ENCODE measurements at regions of chr22 and their contacts with region 1.

Region 1: GRCh38 chr22:43273902-43274484 is 69.2 kb downstream of the SCUBE1 start:
- DNase-seq: peak; percentile 77
- H3K4me3 Mint-ChIP-seq: no peak overlapping the region
- H3K27ac Mint-ChIP-seq: no peak overlapping the region
- H3K4me1 Mint-ChIP-seq: peaks cover 25% of the 10 kb centered on the region
- H3K27me3 Mint-ChIP-seq: no peaks in the 10 kb centered on the region
- CTCF ChIP-seq: peak; percentile 82

Region 2: DNA sequence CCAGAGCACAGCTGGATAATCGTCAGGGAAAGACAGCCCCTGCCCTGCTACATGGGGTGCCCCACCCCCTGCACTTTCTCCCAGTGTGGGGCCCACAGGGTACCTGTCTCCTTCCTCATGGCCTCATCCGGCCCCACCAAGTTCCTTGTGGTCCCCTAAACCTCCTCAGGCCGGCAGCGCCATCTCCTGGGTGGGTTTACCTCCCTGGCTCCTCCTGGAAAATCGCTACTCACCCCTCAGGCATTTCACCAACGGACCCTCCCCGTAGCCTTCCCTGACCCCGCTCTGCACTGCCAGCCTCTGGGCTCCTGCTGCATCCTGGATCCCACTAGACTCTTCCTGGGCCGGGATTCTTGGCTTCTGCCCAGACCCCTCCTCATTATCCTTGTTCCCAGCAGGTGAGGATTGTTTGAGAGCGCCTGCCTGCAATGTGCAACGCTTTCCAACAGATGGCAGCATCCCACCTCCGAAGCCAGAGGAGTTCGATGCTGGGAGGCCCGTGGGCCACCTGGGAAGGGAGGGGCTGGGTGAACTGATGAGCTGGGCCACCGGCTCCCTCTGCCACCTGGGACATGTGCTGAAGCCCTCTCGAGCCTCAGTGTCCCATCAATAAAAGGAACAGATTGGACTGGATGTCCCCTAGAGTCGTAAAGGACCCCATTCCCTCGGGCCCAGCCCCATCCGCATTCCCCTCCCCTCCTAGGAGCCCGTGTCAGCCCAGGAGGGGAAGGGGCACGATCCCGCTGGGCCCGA is 42.8 kb before region 1 on chr22:
- CTCF ChIA-PET with region 1: interaction called, 27 read pairs
- POLR2A ChIA-PET with region 1: no interaction called
- intact Hi-C with region 1: loop called (anchors 2 kb)
- DNase-seq: peak; percentile 65
- H3K4me3 Mint-ChIP-seq: no peak overlapping the region
- H3K27ac Mint-ChIP-seq: no peak overlapping the region
- H3K4me1 Mint-ChIP-seq: peaks cover 12% of the 10 kb centered on the region
- H3K27me3 Mint-ChIP-seq: peaks cover 43% of the 10 kb centered on the region
- CTCF ChIP-seq: peak; percentile 94

Region 3: DNA sequence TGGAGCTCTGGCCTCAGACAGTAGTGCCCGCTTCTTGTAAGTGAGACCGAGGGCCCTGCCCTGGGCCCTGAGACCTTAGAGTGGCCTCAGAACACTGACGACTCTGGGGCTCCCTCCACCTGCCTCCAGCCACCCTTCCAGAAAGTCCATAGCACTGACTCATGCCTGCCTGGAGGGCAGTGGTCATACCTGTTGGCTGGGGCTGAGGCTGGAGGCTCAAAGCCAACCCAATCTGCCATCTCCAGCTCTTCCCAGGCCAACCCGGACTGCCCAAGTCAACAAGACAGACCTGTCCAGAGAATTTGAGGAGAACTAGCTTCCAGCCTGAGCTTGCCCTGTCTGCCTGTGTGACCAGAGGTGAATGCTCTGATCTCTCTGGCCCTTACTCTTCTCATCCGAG is 20.2 kb before region 1 on chr22:
- CTCF ChIA-PET with region 1: interaction called, 11 read pairs
- POLR2A ChIA-PET with region 1: interaction called, 3 read pairs
- intact Hi-C with region 1: no loop called
- DNase-seq: no peak
- H3K4me3 Mint-ChIP-seq: no peak overlapping the region
- H3K27ac Mint-ChIP-seq: no peak overlapping the region
- H3K4me1 Mint-ChIP-seq: peaks cover 9% of the 10 kb centered on the region
- H3K27me3 Mint-ChIP-seq: peaks cover 61% of the 10 kb centered on the region
- CTCF ChIP-seq: no peak

Region 4: GRCh38 chr22:43292630-43293018 is 18.6 kb after region 1 on chr22:
- CTCF ChIA-PET with region 1: no interaction called
- POLR2A ChIA-PET with region 1: no interaction called
- intact Hi-C with region 1: no loop called
- DNase-seq: no peak
- H3K4me3 Mint-ChIP-seq: no peak overlapping the region
- H3K27ac Mint-ChIP-seq: no peak overlapping the region
- H3K4me1 Mint-ChIP-seq: peaks cover 5% of the 10 kb centered on the region
- H3K27me3 Mint-ChIP-seq: no peaks in the 10 kb centered on the region
- CTCF ChIP-seq: no peak

Region 5: DNA sequence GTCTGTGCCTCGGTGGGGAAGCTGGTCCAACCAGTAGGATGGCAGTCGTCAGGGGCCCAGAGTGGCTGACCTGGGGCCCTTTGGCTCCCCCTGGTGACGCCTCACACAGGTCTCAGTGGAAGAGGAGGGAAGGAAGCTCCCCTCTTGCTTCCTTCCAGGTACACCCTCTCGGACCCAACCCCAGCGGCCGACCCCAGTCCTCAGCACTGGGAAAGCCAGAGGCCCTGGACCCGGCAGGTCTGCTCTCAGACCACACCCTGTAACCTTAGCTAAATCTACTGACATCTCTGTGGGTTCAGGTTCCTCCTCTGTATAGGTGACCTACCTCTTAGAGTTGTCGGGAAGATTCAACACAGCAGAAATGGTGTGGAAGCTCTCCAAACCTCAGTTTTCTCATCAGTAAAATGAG is 72.5 kb after region 1 on chr22:
- CTCF ChIA-PET with region 1: interaction called, 89 read pairs
- POLR2A ChIA-PET with region 1: interaction called, 4 read pairs
- intact Hi-C with region 1: loop called (anchors 1 kb)
- DNase-seq: peak; percentile 48
- H3K4me3 Mint-ChIP-seq: no peak overlapping the region
- H3K27ac Mint-ChIP-seq: no peak overlapping the region
- H3K4me1 Mint-ChIP-seq: no peaks in the 10 kb centered on the region
- H3K27me3 Mint-ChIP-seq: peaks cover 67% of the 10 kb centered on the region
- CTCF ChIP-seq: peak; percentile 70

Region 6: GRCh38 chr22:43385770-43386641 is 112.0 kb after region 1 on chr22:
- CTCF ChIA-PET with region 1: interaction called, 61 read pairs
- POLR2A ChIA-PET with region 1: interaction called, 3 read pairs
- intact Hi-C with region 1: loop called (anchors 1 kb)
- DNase-seq: peak; percentile 74
- H3K4me3 Mint-ChIP-seq: no peak overlapping the region
- H3K27ac Mint-ChIP-seq: no peak overlapping the region
- H3K4me1 Mint-ChIP-seq: no peaks in the 10 kb centered on the region
- H3K27me3 Mint-ChIP-seq: peaks cover 93% of the 10 kb centered on the region
- CTCF ChIP-seq: peak; percentile 93

Region 7: GRCh38 chr22:43826142-43827002 is 552.4 kb after region 1 on chr22:
- CTCF ChIA-PET with region 1: interaction called, 13 read pairs
- POLR2A ChIA-PET with region 1: no interaction called
- intact Hi-C with region 1: loop called (anchors 10 kb)
- DNase-seq: peak; percentile 18
- H3K4me3 Mint-ChIP-seq: no peak overlapping the region
- H3K27ac Mint-ChIP-seq: no peak overlapping the region
- H3K4me1 Mint-ChIP-seq: no peaks in the 10 kb centered on the region
- H3K27me3 Mint-ChIP-seq: peaks cover 63% of the 10 kb centered on the region
- CTCF ChIP-seq: peak; percentile 29

Region 8: DNA sequence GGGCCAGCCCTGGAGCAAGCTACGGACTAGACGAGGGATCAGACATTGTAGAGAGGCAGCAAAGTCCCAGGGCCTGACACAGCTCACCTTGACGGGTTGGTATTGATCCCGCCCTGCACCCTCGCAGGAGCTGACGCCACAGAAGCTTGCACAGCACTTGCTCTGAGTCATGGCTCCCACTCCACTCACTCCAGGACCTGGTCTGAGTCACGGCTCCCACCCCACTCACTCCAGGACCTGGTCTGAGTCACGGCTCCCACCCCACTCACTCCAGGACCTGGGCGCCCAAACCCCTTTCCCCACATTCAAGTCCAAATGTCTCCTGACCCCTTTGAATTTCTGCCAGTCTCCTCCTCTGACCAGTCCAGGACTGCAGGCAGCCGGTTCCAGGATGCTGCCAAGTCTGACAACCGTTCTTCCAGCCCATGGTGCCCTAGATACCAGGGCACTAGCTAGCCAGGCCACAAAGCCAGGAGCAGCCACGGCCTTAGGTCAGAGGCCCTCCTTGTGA is 623.8 kb after region 1 on chr22:
- CTCF ChIA-PET with region 1: interaction called, 3 read pairs
- POLR2A ChIA-PET with region 1: no interaction called
- intact Hi-C with region 1: loop called (anchors 10 kb)
- DNase-seq: no peak
- H3K4me3 Mint-ChIP-seq: no peak overlapping the region
- H3K27ac Mint-ChIP-seq: no peak overlapping the region
- H3K4me1 Mint-ChIP-seq: peaks cover 13% of the 10 kb centered on the region
- H3K27me3 Mint-ChIP-seq: no peaks in the 10 kb centered on the region
- CTCF ChIP-seq: no peak